ENCODE measurements at regions of chr19 and their contacts with region 1.

Region 1: DNA sequence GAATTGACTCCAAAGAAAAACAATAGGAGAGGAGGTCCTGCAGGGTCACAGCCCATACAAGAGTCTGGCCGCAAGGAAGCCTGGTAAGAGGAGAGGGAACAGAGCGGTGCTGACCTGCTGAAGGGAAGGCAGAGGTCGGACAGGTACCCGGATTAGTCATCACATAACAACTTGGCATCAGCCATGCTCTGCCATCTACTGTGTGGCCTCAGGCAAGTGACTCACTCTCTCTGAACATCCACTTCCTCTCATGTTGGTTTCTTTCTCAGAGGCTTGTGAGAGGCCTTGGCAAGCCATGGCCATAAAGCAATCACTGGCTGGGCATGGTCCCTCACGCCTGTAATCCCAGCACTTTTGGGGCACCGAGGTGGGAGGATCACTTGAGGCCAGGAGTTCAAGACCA is 7.4 kb upstream of the CAPNS1 start:
- DNase-seq: no peak
- ATAC-seq: no peak
- H3K4me3 ChIP-seq: no peak overlapping the region
- H3K27ac ChIP-seq: no peak overlapping the region
- H3K4me1 ChIP-seq: no peaks in the 10 kb centered on the region
- H3K27me3 ChIP-seq: no peaks in the 10 kb centered on the region

Region 2: GRCh38 chr19:36169084-36169760 is 36.7 kb after region 1 on chr19:
- intact Hi-C with region 1: loop called (anchors 1 kb)
- DNase-seq: no peak
- ATAC-seq: peak; percentile 42
- H3K4me3 ChIP-seq: no peak overlapping the region
- H3K27ac ChIP-seq: peak overlapping the region; percentile 29 to 49
- H3K4me1 ChIP-seq: no peaks in the 10 kb centered on the region
- H3K27me3 ChIP-seq: no peaks in the 10 kb centered on the region